ENCODE measurements at regions of chr19 and their contacts with region 1.

Region 1: GRCh38 chr19:2962045-2962561 is 15.3 kb upstream of the TLE6 start:
- DNase-seq: peak; percentile 70
- ATAC-seq: peak; percentile 63
- H3K4me3 ChIP-seq: 0 out of 6 replicates have a peak overlapping the region, but pooled peaks of 1 of the 3 experiments have one; percentile 10
- H3K27ac ChIP-seq: no peak overlapping the region
- H3K4me1 ChIP-seq: no peaks in the 10 kb centered on the region
- H3K27me3 ChIP-seq: no peaks in the 10 kb centered on the region
- CTCF ChIP-seq: peak; percentile 91
- EP300 ChIP-seq: no peak
- POLR2A ChIP-seq: no peak
- RAD21 ChIP-seq: peak; percentile 73; the same call in 1 of the 2 replicates

Region 2: GRCh38 chr19:3012621-3013260 is 50.6 kb after region 1 on chr19:
- CTCF ChIA-PET with region 1: no interaction called
- POLR2A ChIA-PET with region 1: no interaction called
- in situ Hi-C with region 1: no loop called
- intact Hi-C with region 1: no loop called
- DNase-seq: no peak
- ATAC-seq: no peak
- H3K4me3 ChIP-seq: no peak overlapping the region
- H3K27ac ChIP-seq: no peak overlapping the region
- H3K4me1 ChIP-seq: peaks cover 17% of the 10 kb centered on the region
- H3K27me3 ChIP-seq: peaks cover 2 to 13% of the 10 kb centered on the region in 2 experiments; a peak in 3 of 5 replicates
- CTCF ChIP-seq: no peak
- EP300 ChIP-seq: no peak
- POLR2A ChIP-seq: no peak
- RAD21 ChIP-seq: no peak

Region 3: GRCh38 chr19:3075895-3076431 is 113.9 kb after region 1 on chr19:
- CTCF ChIA-PET with region 1: interaction called, 12 read pairs
- POLR2A ChIA-PET with region 1: no interaction called
- in situ Hi-C with region 1: no loop called
- intact Hi-C with region 1: no loop called
- DNase-seq: no peak
- ATAC-seq: peak; percentile 77
- H3K4me3 ChIP-seq: peak overlapping the region in 1 of 3 experiments; percentile 44; a peak in 1 of 6 replicates
- H3K27ac ChIP-seq: no peak overlapping the region
- H3K4me1 ChIP-seq: peaks cover 20% of the 10 kb centered on the region
- H3K27me3 ChIP-seq: peaks cover 0 to 4% of the 10 kb centered on the region in 2 experiments; a peak in 1 of 5 replicates
- CTCF ChIP-seq: peak; percentile 94
- EP300 ChIP-seq: no peak
- POLR2A ChIP-seq: no peak
- RAD21 ChIP-seq: peak; percentile 95

Region 4: DNA sequence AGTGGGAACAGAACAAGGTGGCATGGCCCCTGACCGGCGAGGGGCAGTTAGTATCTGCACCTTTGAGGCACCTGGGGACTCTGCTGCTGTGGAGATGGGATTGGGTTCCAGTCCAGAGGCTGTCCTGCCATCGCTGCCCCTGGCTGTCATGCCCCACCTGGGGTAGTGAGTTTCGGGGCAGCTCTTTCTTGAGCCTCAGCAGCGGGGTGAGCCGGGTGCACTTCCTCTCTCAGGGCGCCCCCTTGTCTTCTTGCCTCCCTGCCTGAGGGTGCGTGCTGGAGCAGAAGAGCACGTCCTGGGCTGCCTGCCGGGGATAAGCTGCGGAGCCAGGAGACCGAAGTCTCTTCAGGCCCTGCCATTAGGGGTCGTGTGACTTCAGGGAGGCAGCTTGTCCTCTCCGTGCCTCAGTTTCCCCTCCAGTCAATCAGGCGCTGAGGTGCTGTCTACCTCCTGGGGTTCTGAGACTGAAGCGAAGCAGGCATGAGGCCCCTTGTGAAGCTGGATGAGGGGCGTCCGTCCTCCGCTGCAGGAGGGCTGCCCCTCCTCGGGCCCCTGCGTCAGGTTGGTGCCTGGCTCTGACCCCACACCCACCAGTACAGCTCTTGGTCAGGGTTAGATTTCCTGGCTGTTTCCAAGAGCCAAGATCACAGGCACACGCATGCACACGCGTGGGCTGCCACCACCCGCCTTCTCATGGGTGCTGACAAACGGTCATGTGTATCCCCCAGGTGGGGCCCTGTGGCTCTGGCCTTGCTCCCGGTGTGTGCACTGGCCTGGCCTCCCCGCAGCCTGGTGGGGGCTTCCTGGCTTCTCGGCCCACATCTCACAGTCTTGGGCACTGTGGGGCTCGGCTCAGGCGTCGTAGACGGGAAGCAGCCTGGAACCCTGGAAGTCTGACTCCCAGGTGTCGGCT is 140.4 kb after region 1 on chr19:
- CTCF ChIA-PET with region 1: interaction called, 11 read pairs
- POLR2A ChIA-PET with region 1: no interaction called
- in situ Hi-C with region 1: loop called (anchors 5 kb)
- intact Hi-C with region 1: loop called (anchors 1 kb)
- DNase-seq: no peak
- ATAC-seq: no peak
- H3K4me3 ChIP-seq: no peak overlapping the region
- H3K27ac ChIP-seq: no peak overlapping the region
- H3K4me1 ChIP-seq: peaks cover 54% of the 10 kb centered on the region
- H3K27me3 ChIP-seq: no peaks in the 10 kb centered on the region
- CTCF ChIP-seq: no peak
- EP300 ChIP-seq: no peak
- POLR2A ChIP-seq: no peak
- RAD21 ChIP-seq: no peak; the same call in 1 of the 2 replicates

Region 5: DNA sequence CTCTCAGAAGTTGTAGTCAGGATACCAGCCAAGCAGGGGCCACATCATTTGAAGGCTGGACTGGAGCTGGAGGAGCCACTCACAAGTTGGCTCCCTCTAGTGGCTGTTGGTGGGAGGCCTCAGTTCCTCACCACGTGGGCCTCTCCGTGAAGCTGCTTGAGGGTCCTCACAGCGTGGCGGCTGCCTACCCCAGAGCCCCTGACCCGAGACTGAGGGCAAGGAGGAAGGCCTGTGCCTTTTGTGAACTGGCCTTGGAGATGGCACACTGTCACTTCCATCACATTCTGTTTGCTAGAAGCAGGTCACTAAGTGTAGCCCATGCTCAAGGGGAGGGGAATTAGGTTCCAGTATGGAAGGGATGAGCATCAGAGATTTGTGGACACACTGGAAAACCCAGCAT is 146.7 kb after region 1 on chr19:
- CTCF ChIA-PET with region 1: interaction called, 14 read pairs
- POLR2A ChIA-PET with region 1: interaction called, 4 read pairs
- in situ Hi-C with region 1: loop called (anchors 5 kb)
- intact Hi-C with region 1: loop called (anchors 1 kb)
- DNase-seq: peak; percentile 52
- ATAC-seq: peak; percentile 65
- H3K4me3 ChIP-seq: no peak overlapping the region
- H3K27ac ChIP-seq: no peak overlapping the region
- H3K4me1 ChIP-seq: peaks cover 26% of the 10 kb centered on the region
- H3K27me3 ChIP-seq: no peaks in the 10 kb centered on the region
- CTCF ChIP-seq: peak; percentile 86
- EP300 ChIP-seq: no peak
- POLR2A ChIP-seq: no peak
- RAD21 ChIP-seq: peak; percentile 66

Region 6: DNA sequence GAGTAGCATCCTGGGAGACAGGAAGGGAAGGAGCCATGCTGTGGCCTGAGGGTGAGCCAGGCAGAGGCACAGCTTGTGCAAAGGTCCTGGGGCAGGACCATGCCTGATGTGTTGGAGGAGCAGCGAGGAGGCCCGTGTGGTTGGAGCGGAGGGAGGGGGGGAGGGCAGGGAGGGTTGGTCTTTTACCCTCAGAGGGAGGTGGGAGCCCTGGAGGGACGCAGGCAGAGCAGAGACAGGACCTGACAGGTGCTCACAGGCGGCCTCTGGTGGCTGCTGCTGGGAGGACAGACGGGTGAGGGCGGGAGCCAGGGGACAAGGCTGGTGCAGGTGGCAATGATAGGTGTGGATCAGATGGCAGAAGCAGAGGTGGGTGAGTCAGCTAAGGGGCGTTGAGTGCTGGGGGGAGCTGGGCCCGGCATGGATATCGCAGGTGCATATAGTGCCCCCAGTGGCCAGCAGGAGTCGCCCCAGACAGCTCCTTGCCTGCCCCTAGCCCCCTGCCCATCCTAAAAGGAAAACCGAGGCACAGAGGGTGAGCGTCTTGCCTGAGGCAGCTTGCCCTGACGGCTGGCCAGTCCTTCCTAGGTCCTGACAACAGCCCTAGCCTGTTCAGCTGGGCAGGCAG is 163.9 kb after region 1 on chr19:
- CTCF ChIA-PET with region 1: interaction called, 15 read pairs
- POLR2A ChIA-PET with region 1: no interaction called
- in situ Hi-C with region 1: no loop called
- intact Hi-C with region 1: loop called (anchors 1 kb)
- DNase-seq: peak; percentile 43
- ATAC-seq: peak; percentile 86
- H3K4me3 ChIP-seq: no peak overlapping the region
- H3K27ac ChIP-seq: no peak overlapping the region
- H3K4me1 ChIP-seq: no peaks in the 10 kb centered on the region
- H3K27me3 ChIP-seq: no peaks in the 10 kb centered on the region
- CTCF ChIP-seq: peak; percentile 95
- EP300 ChIP-seq: no peak
- POLR2A ChIP-seq: no peak
- RAD21 ChIP-seq: peak; percentile 33; the same call in 1 of the 2 replicates

Measured in HepG2 (cell line).